ENCODE measurements at regions of chr16 and their contacts with region 1.

Region 1: DNA sequence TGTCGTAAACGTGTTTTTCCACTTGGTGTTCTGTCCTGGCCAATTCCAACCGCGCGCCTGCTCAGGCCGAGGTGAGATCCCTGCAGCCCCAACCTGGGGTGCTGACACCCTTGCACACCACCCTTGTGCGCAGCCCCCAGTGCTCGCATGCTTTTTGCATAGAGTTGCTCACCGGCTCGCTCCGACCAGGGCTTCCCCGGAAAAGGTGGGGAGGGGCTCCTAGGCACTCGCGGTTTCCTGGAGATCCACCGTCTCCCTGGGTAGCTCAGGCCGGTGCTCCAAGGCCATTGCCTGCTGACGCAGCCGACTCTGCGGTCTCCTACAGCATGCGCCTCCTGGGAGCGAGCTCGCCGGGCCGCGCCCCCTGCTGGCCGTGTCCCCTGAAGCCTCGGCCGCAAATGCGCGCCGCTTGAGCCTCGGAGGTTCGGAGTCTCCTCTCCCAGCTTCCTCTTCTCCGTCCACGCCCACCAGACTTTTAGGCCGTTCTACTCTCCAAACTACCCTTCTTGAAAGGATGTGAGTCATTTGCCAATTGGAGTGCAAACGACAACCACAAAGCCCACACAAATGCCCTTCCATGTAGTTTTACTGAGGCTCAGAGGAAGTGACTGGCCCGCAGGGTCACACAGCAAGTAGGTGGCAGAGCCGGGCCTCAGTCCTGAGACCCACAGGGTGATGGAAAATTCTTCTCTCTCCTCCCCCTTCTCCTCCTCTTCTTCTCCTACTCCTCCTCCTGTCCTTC is 7.2 kb upstream of the PDP2 start:
- DNase-seq: peak; percentile 98
- ATAC-seq: peak; percentile 93
- H3K4me3 Mint-ChIP-seq: peak overlapping the region; percentile 80
- H3K27ac Mint-ChIP-seq: peak overlapping the region; percentile 93
- H3K4me1 Mint-ChIP-seq: peaks cover 53% of the 10 kb centered on the region
- H3K27me3 Mint-ChIP-seq: no peaks in the 10 kb centered on the region

Region 2: DNA sequence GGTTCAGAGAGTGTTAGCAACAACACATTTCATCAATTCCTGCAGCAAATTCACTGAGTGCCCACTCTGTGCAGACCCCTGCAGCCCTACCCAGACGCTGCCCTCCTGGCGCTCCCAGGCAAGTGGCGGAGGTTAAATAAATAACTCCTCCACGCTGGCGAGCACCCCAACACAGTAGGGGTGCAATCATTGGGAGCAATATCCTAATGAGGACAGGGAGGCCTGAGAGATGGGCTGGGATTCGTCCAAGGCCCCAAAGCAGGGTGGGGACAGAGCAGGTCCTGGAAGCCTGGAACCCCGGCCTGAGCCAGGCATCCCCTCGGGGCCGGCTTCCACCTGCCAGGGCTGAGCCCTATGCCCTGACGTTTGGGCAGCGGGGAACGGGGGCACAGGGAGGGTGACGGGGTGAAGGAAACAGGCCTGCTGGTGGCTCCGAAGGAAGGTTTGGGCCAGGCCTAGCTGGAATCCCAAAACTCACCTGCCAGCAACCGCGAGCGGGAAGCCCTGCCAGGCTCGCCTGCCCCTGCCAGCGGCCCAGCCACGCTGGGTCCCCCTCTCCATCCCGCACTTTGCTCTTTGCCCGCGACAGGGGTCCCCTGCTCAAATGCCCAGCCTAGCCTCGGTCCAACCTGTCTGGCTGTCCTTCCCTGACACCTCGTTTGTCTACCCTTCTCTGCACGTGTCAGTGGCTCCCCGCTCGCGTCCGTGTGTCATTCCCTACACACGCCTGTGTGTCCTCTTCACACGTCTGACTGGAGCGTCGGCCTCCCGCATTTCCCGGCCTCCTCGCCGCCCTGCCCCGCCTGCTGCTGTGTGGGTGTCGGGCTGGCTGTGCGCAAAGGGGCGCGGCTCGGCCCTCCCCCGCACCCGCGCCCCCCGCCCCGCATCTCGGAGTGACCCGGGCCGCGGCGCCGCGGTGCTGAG is 446.7 kb before region 1 on chr16:
- CTCF ChIA-PET with region 1: no interaction called
- POLR2A ChIA-PET with region 1: no interaction called
- DNase-seq: no peak
- ATAC-seq: peak; percentile 16
- H3K4me3 Mint-ChIP-seq: peak overlapping the region; percentile 11
- H3K27ac Mint-ChIP-seq: no peak overlapping the region
- H3K4me1 Mint-ChIP-seq: no peaks in the 10 kb centered on the region
- H3K27me3 Mint-ChIP-seq: peaks cover 75% of the 10 kb centered on the region

Region 3: DNA sequence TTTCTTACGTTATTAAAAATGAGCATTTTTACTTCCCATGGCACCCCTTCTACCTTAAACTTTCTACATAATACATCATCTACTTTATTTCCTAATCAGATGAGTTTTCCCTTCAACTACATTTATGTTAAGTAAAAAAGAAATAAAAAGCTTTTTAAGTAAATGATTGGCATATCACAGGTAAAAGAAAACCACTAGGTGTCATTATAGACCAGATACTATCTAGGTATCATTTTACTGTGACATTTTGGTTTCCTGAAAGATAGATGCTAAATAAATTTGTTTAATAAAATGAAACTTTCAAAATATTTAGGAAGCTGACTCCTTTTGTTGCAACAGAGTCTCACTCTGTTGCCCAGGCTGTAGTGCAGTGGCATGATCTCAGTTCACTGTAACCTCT is 310.7 kb before region 1 on chr16:
- CTCF ChIA-PET with region 1: interaction called, 13 read pairs
- POLR2A ChIA-PET with region 1: no interaction called
- DNase-seq: no peak
- ATAC-seq: no peak
- H3K4me3 Mint-ChIP-seq: no peak overlapping the region
- H3K27ac Mint-ChIP-seq: no peak overlapping the region
- H3K4me1 Mint-ChIP-seq: peaks cover 65% of the 10 kb centered on the region
- H3K27me3 Mint-ChIP-seq: no peaks in the 10 kb centered on the region

Region 4: GRCh38 chr16:66650707-66651473 is 222.2 kb before region 1 on chr16:
- CTCF ChIA-PET with region 1: interaction called, 15 read pairs
- POLR2A ChIA-PET with region 1: no interaction called
- DNase-seq: peak; percentile 91
- ATAC-seq: peak; percentile 99
- H3K4me3 Mint-ChIP-seq: peak overlapping the region; percentile 10
- H3K27ac Mint-ChIP-seq: no peak overlapping the region
- H3K4me1 Mint-ChIP-seq: peaks cover 16% of the 10 kb centered on the region
- H3K27me3 Mint-ChIP-seq: peaks cover 7% of the 10 kb centered on the region

Region 5: GRCh38 chr16:66728117-66728787 is 144.9 kb before region 1 on chr16:
- CTCF ChIA-PET with region 1: interaction called, 55 read pairs
- POLR2A ChIA-PET with region 1: no interaction called
- DNase-seq: peak; percentile 44
- ATAC-seq: peak; percentile 83
- H3K4me3 Mint-ChIP-seq: no peak overlapping the region
- H3K27ac Mint-ChIP-seq: peak overlapping the region; percentile 33
- H3K4me1 Mint-ChIP-seq: peaks cover 24% of the 10 kb centered on the region
- H3K27me3 Mint-ChIP-seq: no peaks in the 10 kb centered on the region

Region 6: DNA sequence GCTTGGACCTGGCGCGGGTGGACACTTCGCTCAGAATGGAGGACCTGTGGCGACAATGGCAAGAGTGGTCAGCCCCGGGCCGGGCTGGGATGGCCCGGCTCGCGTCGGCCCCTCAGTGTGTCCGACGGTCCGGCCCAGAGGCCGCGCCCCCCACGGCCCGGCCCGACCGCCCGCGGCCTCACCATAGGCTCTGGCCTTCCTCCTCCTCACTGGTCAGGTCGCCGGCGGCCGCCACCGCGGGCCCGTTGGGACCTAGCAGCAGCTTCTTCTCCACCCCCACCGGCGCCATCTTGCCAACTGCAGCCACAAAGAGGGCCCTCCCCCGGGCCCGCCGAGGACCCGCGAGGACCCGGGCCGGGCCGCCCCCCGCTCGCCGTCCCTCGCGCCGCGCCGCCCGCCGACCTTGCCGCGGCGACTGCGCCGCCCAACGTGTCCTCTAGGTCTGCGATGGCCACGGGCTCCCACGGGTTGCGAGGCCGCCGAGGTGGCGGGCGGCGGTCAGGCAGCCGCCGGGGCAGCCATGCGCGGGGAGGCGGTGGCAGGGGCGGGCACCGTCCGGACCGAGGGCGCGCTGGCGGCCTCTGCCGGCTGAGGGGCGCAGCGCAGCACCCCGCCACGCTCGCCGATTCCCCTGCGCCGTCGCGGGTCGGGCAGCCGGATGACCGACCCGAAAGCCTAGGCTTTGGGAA is 121.7 kb before region 1 on chr16 and contains the start of gene DYNC1LI2:
- CTCF ChIA-PET with region 1: interaction called, 11 read pairs
- POLR2A ChIA-PET with region 1: interaction called, 5 read pairs
- DNase-seq: peak; percentile 84
- ATAC-seq: peak; percentile 84
- H3K4me3 Mint-ChIP-seq: peak within 1 kb of the TSS; percentile 80
- H3K27ac Mint-ChIP-seq: peak within 1 kb of the TSS; percentile 90
- H3K4me1 Mint-ChIP-seq: peaks cover 44% of the 10 kb centered on the region
- H3K27me3 Mint-ChIP-seq: peaks cover 17% of the 10 kb centered on the region
- total RNA-seq, gene DYNC1LI2: 56.5 to 63.1 TPM

Region 7: GRCh38 chr16:66850115-66850815 is 22.8 kb before region 1 on chr16:
- CTCF ChIA-PET with region 1: interaction called, 24 read pairs
- POLR2A ChIA-PET with region 1: interaction called, 5 read pairs
- DNase-seq: no peak
- ATAC-seq: no peak
- H3K4me3 Mint-ChIP-seq: no peak overlapping the region
- H3K27ac Mint-ChIP-seq: no peak overlapping the region
- H3K4me1 Mint-ChIP-seq: peaks cover 24% of the 10 kb centered on the region
- H3K27me3 Mint-ChIP-seq: peaks cover 14% of the 10 kb centered on the region

Region 8: GRCh38 chr16:66894948-66895688 is 22.0 kb after region 1 on chr16:
- CTCF ChIA-PET with region 1: interaction called, 19 read pairs
- POLR2A ChIA-PET with region 1: interaction called, 3 read pairs
- DNase-seq: peak; percentile 82
- ATAC-seq: peak; percentile 94
- H3K4me3 Mint-ChIP-seq: no peak overlapping the region
- H3K27ac Mint-ChIP-seq: peak overlapping the region; percentile 51
- H3K4me1 Mint-ChIP-seq: peaks cover 22% of the 10 kb centered on the region
- H3K27me3 Mint-ChIP-seq: no peaks in the 10 kb centered on the region

Region 9: GRCh38 chr16:67091906-67092566 is 218.9 kb after region 1 on chr16:
- CTCF ChIA-PET with region 1: no interaction called
- POLR2A ChIA-PET with region 1: no interaction called
- DNase-seq: no peak
- ATAC-seq: no peak
- H3K4me3 Mint-ChIP-seq: no peak overlapping the region
- H3K27ac Mint-ChIP-seq: peak overlapping the region; percentile 10
- H3K4me1 Mint-ChIP-seq: no peaks in the 10 kb centered on the region
- H3K27me3 Mint-ChIP-seq: no peaks in the 10 kb centered on the region

Measured in activated CD8-positive, alpha-beta T cell treated with anti-CD3 and anti-CD28 coated beads, Interleukin-2, amount 10 ng/mL, durations not matched to agents 7 days and 5 days (primary cell).